GM18951 (cell line): ENCODE measurements at regions of chr2 and their contacts with region 1.

Region 1: DNA sequence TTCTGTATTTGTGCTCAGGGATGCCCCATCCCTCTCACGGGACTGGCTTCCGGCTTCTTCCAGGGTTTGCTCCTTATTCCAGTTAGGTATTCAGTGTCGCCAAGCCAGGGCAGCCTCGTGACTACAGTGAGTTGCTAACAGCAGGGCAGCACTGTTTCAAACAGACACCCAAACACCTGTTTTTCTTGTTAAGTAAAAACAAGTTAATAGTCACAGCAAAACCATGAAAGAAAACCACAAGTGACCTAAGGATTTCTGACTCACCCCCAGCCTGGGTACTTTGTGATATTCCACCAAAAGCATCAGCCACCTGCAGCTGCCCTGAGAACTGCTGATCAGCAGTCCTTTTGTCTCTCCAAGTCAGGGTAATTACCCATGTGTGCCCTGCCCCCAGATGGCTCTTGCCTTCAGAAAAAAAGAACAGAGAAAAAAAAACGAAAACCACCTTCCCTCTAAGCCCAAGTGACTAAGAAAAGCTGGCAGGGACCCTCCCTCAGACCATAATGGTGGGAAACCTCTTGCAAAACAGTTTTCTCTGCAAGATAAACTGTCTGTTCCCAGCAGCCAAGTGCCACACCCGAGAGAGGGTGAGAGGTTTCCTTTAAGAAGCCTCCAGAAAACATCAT is 178.2 kb downstream of the ANAPC1 start:
- POLR2A ChIP-seq: no peak

Region 2: GRCh38 chr2:110804915-110805314 is 900.9 kb before region 1 on chr2:
- in situ Hi-C with region 1: loop called (anchors 25 kb)
- POLR2A ChIP-seq: no peak

Region 3: DNA sequence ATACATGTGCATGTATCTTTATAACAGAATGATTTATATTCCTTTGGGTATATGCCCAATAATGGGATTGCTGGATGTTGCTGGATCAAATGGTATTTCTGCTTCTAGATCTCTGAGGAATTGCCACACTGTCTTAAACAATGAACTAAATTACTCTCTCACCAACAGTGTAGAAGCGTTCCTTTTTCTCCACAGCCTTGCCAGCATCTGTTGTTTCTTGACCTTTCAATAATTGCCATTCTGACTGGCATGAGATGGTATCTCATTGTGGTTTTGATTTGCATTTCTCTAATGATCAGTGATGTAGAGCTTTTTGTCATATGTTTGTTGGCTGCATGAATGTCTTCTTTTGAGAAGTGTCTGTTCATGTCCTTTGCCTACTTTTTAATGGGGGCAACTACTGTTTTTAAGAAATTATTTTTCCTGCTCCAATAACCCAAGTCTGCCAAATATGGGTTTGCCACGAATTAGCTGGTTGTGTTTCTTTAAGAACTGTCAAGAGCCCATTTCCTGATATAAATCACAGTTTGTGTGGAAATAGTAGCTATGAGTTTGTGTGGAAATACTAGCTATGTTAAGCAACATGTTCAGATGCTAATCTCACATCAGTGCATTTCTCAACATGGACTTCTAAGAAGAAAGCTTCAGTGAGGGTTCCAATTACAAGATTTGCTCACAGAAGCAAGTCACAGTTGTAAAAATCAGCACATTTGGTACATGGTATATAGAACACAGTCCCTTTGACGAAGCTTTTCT is 81.2 kb before region 1 on chr2:
- in situ Hi-C with region 1: no loop called
- POLR2A ChIP-seq: no peak